ENCODE measurements at regions of chr9 and their contacts with region 1.

Region 1: GRCh38 chr9:684054-684890 is 157.2 kb upstream of the DMRT1 start:
- DNase-seq: no peak
- H3K4me3 ChIP-seq: peak overlapping the region; percentile 22
- H3K4me3 Mint-ChIP-seq: peak overlapping the region; percentile 34
- H3K27ac Mint-ChIP-seq: no peak overlapping the region
- H3K4me1 ChIP-seq: peaks cover 35% of the 10 kb centered on the region
- H3K4me1 Mint-ChIP-seq: no peaks in the 10 kb centered on the region
- H3K27me3 ChIP-seq: no peaks in the 10 kb centered on the region
- H3K27me3 Mint-ChIP-seq: no peaks in the 10 kb centered on the region
- CTCF ChIP-seq: no peak

Region 2: GRCh38 chr9:613771-614347 is 70.4 kb before region 1 on chr9:
- CTCF ChIA-PET with region 1: no interaction called
- POLR2A ChIA-PET with region 1: no interaction called
- intact Hi-C with region 1: loop called (anchors 1 kb)
- DNase-seq: peak; percentile 67 to 71
- H3K4me3 ChIP-seq: no peak overlapping the region
- H3K4me3 Mint-ChIP-seq: no peak overlapping the region
- H3K27ac Mint-ChIP-seq: no peak overlapping the region
- H3K4me1 ChIP-seq: peaks cover 40% of the 10 kb centered on the region
- H3K4me1 Mint-ChIP-seq: peaks cover 16% of the 10 kb centered on the region
- H3K27me3 ChIP-seq: no peaks in the 10 kb centered on the region
- H3K27me3 Mint-ChIP-seq: no peaks in the 10 kb centered on the region
- CTCF ChIP-seq: peak; percentile 53 to 65

Region 3: GRCh38 chr9:665296-665695 is 19.0 kb before region 1 on chr9:
- CTCF ChIA-PET with region 1: no interaction called
- POLR2A ChIA-PET with region 1: no interaction called
- intact Hi-C with region 1: loop called (anchors 2 kb)
- DNase-seq: no peak
- H3K4me3 ChIP-seq: no peak overlapping the region
- H3K4me3 Mint-ChIP-seq: no peak overlapping the region
- H3K27ac Mint-ChIP-seq: no peak overlapping the region
- H3K4me1 ChIP-seq: peaks cover 6% of the 10 kb centered on the region; the same call in 1 of the 2 replicates
- H3K4me1 Mint-ChIP-seq: peaks cover 14% of the 10 kb centered on the region
- H3K27me3 ChIP-seq: no peaks in the 10 kb centered on the region
- H3K27me3 Mint-ChIP-seq: no peaks in the 10 kb centered on the region
- CTCF ChIP-seq: no peak

Region 4: GRCh38 chr9:706606-707459 is 22.6 kb after region 1 on chr9:
- CTCF ChIA-PET with region 1: no interaction called
- POLR2A ChIA-PET with region 1: no interaction called
- intact Hi-C with region 1: loop called (anchors 1 kb)
- DNase-seq: peak; percentile 62 to 63
- H3K4me3 ChIP-seq: peak overlapping the region; percentile 57
- H3K4me3 Mint-ChIP-seq: peak overlapping the region; percentile 97
- H3K27ac Mint-ChIP-seq: peak overlapping the region; percentile 95
- H3K4me1 ChIP-seq: peaks cover 32% of the 10 kb centered on the region
- H3K4me1 Mint-ChIP-seq: peaks cover 23% of the 10 kb centered on the region
- H3K27me3 ChIP-seq: no peaks in the 10 kb centered on the region
- H3K27me3 Mint-ChIP-seq: no peaks in the 10 kb centered on the region
- CTCF ChIP-seq: no peak

Measured in Caco-2 (cell line).